ENCODE measurements at regions of chr14 and their contacts with region 1.

Region 1: DNA sequence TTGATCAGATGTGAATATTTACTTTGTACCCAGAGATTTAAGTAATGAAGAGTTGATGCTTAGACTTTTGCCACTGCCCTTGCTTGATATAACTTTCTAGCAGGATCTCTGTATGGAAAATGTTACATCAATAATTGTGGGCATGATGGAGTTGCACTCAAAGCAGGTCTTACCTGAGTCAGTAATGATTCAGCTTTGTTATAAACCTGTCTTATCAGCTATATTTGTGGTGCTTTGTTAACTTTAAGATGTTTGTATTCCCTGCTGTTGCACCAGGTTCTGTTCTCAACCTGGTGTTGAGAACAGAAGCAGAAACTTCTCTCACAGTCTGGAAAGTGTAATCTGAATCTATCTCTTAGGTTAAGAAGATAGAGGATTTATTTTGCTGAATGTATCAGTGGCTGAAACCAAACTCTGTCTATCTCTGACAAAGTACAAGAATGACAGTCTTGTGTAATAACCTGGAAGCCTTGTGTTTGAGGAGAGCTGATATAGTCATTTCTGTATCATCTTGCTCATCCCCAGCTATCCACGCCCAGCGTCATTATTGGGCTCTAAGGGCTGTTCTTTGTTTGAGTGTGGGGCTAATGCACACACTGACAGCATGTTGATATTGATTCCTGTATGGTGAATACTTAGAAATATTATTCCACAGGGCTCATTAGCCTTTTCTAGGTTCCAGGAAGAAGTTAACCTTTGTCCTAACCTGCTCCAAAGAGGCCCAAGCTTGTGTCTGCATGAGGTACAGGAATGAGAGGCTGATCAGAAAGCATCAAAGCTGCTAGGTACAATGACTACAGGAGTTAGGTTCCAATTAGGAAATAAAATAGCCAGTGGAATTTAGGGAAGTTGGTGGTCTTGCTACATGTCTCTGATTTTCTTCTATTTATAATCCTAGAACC is 3.6 kb downstream of the AKAP6 start:
- DNase-seq: peak in 1 of 2 experiments; percentile 22
- H3K4me3 ChIP-seq: no peak overlapping the region
- H3K4me3 Mint-ChIP-seq: no peak overlapping the region
- H3K27ac Mint-ChIP-seq: no peak overlapping the region
- H3K4me1 ChIP-seq: peaks cover 16% of the 10 kb centered on the region
- H3K4me1 Mint-ChIP-seq: peaks cover 14% of the 10 kb centered on the region
- H3K27me3 ChIP-seq: no peaks in the 10 kb centered on the region
- H3K27me3 Mint-ChIP-seq: no peaks in the 10 kb centered on the region
- CTCF ChIP-seq: no peak

Region 2: DNA sequence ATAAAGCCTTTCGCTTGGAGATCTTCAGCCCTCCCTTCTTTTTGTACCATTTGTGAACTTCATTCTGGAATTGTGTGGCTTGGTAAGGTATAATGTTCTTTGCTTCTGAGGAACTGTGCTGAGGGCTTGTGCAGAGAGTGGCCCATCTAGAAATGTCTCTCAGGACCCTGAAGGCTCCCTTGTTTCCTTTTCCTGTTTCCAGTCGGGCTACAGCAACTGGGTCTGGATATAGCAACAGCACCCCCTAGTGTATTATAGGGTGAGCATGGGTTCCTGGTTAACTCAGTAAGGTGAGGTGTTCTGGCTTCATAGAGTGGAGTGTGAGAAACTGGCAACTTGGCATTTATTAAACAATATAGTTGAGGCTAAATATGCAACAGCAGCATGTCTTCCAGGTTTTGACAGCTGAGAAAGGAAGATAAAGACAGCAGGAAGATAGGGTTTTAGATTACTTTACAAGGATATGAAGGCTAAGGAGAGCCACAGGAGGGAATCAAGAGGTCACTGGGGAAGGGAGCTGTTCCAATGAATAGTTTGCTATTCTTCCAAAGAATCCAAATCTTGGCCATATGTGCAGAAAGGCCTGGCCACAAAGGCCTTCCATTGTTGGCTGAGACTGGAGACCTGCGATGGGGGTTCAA is 80.5 kb before region 1 on chr14:
- CTCF ChIA-PET with region 1: no interaction called
- POLR2A ChIA-PET with region 1: no interaction called
- intact Hi-C with region 1: no loop called
- DNase-seq: peak; percentile 65 to 78
- H3K4me3 ChIP-seq: no peak overlapping the region
- H3K4me3 Mint-ChIP-seq: no peak overlapping the region
- H3K27ac Mint-ChIP-seq: no peak overlapping the region
- H3K4me1 ChIP-seq: peaks cover 5% of the 10 kb centered on the region
- H3K4me1 Mint-ChIP-seq: no peaks in the 10 kb centered on the region
- H3K27me3 ChIP-seq: no peaks in the 10 kb centered on the region
- H3K27me3 Mint-ChIP-seq: no peaks in the 10 kb centered on the region
- CTCF ChIP-seq: peak; percentile 60 to 85

Region 3: GRCh38 chr14:32366256-32366879 is 33.7 kb after region 1 on chr14:
- CTCF ChIA-PET with region 1: no interaction called
- POLR2A ChIA-PET with region 1: no interaction called
- intact Hi-C with region 1: loop called (anchors 2 kb)
- DNase-seq: peak in 1 of 2 experiments; percentile 43
- H3K4me3 ChIP-seq: no peak overlapping the region
- H3K4me3 Mint-ChIP-seq: no peak overlapping the region
- H3K27ac Mint-ChIP-seq: peak overlapping the region; percentile 34
- H3K4me1 ChIP-seq: peaks cover 10% of the 10 kb centered on the region
- H3K4me1 Mint-ChIP-seq: peaks cover 32% of the 10 kb centered on the region
- H3K27me3 ChIP-seq: no peaks in the 10 kb centered on the region
- H3K27me3 Mint-ChIP-seq: no peaks in the 10 kb centered on the region
- CTCF ChIP-seq: peak in 1 of 2 experiments; percentile 42

Measured in Caco-2 (cell line).